ENCODE measurements at regions of chr11 and their contacts with region 1.

Region 1: DNA sequence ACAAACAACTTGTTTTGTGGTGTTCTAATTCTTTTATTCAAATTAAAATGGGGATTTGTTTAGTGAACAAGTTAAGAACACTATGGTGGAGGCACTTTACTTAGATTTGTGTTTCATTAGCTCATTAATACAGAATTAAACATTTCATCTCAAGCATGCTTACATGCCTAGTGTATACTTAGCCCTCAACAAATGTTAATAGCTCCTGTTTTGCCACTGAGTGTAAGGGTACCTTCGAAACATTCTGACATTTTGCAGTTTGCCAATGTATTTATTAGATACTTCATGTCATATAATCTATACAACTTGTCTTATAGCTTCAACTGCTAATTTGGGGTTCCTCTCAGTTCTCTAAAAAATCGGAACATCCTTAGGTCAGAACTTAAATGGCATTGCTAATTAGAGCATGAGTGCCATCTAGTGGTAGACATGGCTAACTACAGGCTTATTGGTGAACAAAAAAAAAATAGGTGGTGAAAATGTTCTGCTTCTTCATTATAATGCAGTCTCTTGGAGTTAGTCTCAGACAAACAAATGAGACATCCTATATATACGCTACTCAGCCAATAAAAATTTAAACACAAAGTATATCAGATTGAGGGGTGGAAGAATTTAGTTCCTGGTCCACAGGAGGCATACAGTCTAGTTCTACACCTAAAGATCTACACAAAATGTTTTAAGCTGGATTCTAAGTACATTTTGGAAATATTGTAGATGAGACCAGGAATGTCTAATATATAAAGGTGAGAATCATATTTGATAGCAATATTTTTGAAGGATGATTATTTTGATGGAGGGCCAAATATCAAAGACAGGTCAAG is 4.9 kb upstream of the CNTN5 start:
- DNase-seq: no peak
- H3K4me3 ChIP-seq: no peak overlapping the region
- H3K27ac ChIP-seq: no peak overlapping the region
- H3K4me1 ChIP-seq: no peaks in the 10 kb centered on the region
- H3K27me3 ChIP-seq: peaks cover 0 to 7% (median 3%) of the 10 kb centered on the region in 4 experiments; a peak in 4 of 7 replicates
- CTCF ChIP-seq: peak in 2 of 3 experiments; percentile 56 to 75; a peak in 3 of 4 replicates
- EP300 ChIP-seq: no peak
- POLR2A ChIP-seq: no peak
- RAD21 ChIP-seq: peak; percentile 94 to 96

Region 2: GRCh38 chr11:98455500-98456307 is 560.1 kb before region 1 on chr11:
- CTCF ChIA-PET with region 1: interaction called, 30 read pairs
- POLR2A ChIA-PET with region 1: no interaction called
- DNase-seq: peak; percentile 29 to 56
- H3K4me3 ChIP-seq: no peak overlapping the region
- H3K27ac ChIP-seq: no peak overlapping the region
- H3K4me1 ChIP-seq: peaks cover 0 to 5% (median 0%) of the 10 kb centered on the region in 4 experiments; a peak in 1 of 7 replicates
- H3K27me3 ChIP-seq: no peaks in the 10 kb centered on the region
- CTCF ChIP-seq: peak in 2 of 3 experiments; percentile 63 to 90; a peak in 3 of 4 replicates
- EP300 ChIP-seq: no peak
- POLR2A ChIP-seq: no peak
- RAD21 ChIP-seq: peak; percentile 80 to 81

Region 3: DNA sequence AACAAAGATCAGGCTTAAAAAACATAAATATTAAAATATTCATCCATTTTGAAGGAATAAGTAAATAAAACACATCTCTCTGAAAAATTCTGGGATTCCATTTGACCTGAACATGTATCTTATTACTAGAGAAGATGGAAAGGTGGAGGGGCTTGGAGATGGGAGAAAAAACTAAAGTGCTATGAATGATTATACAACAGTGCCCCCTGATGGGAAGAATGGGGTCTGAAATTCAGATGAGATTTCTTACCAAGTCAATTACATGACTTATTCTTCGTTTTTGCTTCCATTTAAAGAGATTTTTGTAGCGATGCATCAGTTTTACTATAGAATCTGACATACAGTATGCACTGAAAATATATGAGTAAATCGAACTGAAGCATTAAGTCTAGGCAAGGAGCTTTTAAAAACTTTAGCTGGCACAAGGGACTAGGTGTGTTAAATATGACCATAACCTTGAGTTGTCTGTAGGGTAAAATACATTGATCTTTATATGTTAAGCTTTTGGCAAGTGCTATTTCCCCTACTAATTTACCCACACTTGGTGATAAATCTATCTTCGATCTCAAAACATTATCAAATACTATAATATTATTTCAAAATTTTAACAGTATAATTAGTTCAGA is 723.7 kb after region 1 on chr11:
- CTCF ChIA-PET with region 1: interaction called, 12 read pairs
- POLR2A ChIA-PET with region 1: no interaction called
- DNase-seq: peak in 1 of 2 experiments; percentile 7
- H3K4me3 ChIP-seq: no peak overlapping the region
- H3K27ac ChIP-seq: no peak overlapping the region
- H3K4me1 ChIP-seq: no peaks in the 10 kb centered on the region
- H3K27me3 ChIP-seq: no peaks in the 10 kb centered on the region
- CTCF ChIP-seq: peak in 2 of 3 experiments; percentile 47 to 61; a peak in 2 of 4 replicates
- EP300 ChIP-seq: no peak
- POLR2A ChIP-seq: no peak
- RAD21 ChIP-seq: peak; percentile 83 to 84